ENCODE measurements at regions of chr2 and their contacts with region 1.

Region 1: DNA sequence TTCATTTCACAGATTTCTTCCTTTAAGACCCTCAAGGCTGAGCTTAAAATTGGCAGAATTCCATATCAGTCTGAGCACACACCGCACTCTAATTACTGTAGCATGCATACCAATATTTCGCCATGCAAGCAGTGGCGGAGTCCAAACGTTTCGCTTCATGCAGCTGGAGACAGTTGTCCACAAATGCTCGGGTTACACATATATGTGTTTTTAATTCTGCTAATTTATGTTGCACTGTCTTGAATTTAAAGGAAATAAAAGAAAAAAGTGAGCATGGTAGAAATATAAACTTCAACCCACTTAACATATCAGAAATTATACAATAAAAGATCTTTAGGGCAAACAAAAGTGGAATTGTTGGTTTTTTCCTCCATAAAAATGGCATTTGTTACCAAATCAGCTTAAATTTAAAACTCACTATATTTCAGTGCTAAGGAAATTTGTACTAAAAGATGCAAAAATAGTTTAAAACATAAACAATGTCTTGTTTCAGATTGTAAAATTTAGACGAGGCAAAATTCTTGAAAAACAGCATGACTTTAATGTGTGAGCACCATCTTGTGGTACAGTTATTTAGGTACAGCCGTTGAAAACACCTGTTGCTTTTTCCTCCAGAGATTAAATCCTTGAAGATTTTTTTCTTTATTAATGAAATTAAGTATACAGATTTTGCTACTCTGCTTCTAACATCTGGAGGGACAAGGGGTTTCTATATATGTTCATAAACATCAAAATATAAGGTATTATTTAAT is 24.1 kb upstream of the KANSL1L start:
- DNase-seq: peak; percentile 51
- ATAC-seq: peak; percentile 88
- H3K4me3 ChIP-seq: peak overlapping the region; percentile 5 to 44 (median 34); a peak in 4 of 6 replicates
- H3K27ac ChIP-seq: no peak overlapping the region
- H3K4me1 ChIP-seq: peaks cover 7% of the 10 kb centered on the region; the same call in 1 of the 2 replicates
- H3K27me3 ChIP-seq: no peaks in the 10 kb centered on the region
- CTCF ChIP-seq: peak; percentile 77
- EP300 ChIP-seq: no peak
- POLR2A ChIP-seq: no peak
- RAD21 ChIP-seq: peak; percentile 82

Region 2: GRCh38 chr2:209790066-209790728 is 405.1 kb before region 1 on chr2:
- CTCF ChIA-PET with region 1: no interaction called
- POLR2A ChIA-PET with region 1: no interaction called
- in situ Hi-C with region 1: no loop called
- intact Hi-C with region 1: loop called (anchors 5 kb)
- DNase-seq: no peak
- ATAC-seq: peak; percentile 37; the same call in 2 of the 3 replicates
- H3K4me3 ChIP-seq: peak overlapping the region in 2 of 3 experiments; percentile 8 to 14; a peak in 3 of 6 replicates
- H3K27ac ChIP-seq: no peak overlapping the region
- H3K4me1 ChIP-seq: no peaks in the 10 kb centered on the region
- H3K27me3 ChIP-seq: no peaks in the 10 kb centered on the region
- CTCF ChIP-seq: no peak
- EP300 ChIP-seq: no peak
- POLR2A ChIP-seq: no peak
- RAD21 ChIP-seq: no peak

Region 3: DNA sequence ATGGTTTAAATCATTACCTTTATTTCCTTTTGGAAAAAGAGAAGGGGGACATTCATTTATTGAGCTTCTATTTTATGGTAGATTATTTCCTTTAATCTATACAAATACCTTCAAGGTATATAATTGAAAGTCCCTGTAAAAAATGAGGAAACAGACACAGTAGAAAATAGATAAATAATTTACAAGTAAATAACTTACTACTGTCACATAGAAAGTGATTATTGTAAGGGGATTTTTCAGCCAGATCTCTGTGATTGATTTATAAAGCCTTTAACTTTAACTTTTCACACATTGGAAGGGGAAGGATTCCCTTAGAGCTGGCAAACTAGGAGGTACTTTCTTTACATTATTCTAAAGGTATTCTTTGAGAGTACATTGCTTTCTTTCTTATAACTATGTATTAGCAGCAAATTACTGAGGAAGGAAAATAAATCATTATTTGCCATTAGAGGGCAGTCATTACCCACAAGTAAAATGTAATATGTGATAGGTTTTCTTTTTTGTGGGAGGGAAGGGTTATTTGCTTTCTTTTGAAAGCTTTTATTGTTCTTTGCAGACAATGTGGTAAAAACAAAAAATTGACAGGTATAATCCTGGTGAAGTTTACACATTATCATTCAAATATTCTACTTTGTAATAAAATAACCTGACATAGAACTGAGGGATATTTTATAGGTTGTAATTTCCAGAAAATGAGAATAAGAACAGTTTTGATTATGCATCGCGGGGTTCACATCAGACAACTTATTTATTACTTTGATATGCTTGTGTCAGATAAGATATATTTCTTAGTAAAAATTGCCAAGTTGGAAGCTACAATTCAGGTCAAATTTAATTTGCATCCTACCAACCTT is 217.7 kb before region 1 on chr2:
- CTCF ChIA-PET with region 1: interaction called, 66 read pairs
- POLR2A ChIA-PET with region 1: no interaction called
- in situ Hi-C with region 1: loop called (anchors 5 kb)
- intact Hi-C with region 1: loop called (anchors 1 kb)
- DNase-seq: peak; percentile 39
- ATAC-seq: no peak; the same call in 2 of the 3 replicates
- H3K4me3 ChIP-seq: no peak overlapping the region
- H3K27ac ChIP-seq: no peak overlapping the region
- H3K4me1 ChIP-seq: no peaks in the 10 kb centered on the region
- H3K27me3 ChIP-seq: peaks cover 0 to 5% of the 10 kb centered on the region in 2 experiments; a peak in 1 of 5 replicates
- CTCF ChIP-seq: peak; percentile 68
- EP300 ChIP-seq: no peak
- POLR2A ChIP-seq: no peak
- RAD21 ChIP-seq: peak; percentile 61

Region 4: DNA sequence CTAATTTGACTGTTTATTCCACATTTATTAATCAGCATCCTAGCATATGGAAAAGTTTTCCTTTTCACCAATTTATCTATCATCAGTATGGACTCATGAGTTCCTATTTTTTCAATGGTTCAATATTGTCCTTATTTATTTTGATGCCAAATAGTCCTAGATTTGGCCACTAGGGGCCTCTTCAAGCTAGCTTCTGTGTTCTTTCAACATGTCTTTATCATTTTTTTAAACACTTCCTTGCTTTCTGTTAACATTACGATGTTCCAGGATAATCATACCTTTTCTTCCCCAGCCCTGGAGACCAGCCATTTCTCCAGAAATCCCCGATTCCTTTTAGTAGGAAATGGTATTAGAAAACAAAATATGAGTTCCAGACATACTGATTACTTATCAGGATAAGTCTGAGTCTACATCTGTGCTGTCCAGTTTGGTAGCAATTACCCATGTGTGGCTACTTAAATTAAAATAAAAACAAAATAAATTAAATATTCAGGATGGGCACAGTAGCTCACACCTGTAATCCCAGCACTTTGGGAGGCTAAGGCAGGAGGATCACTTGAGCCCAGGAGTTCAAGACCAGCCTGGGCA is 122.3 kb before region 1 on chr2:
- CTCF ChIA-PET with region 1: interaction called, 30 read pairs
- POLR2A ChIA-PET with region 1: no interaction called
- in situ Hi-C with region 1: loop called (anchors 5 kb)
- intact Hi-C with region 1: loop called (anchors 1 kb)
- DNase-seq: peak; percentile 46
- ATAC-seq: peak; percentile 88
- H3K4me3 ChIP-seq: no peak overlapping the region
- H3K27ac ChIP-seq: no peak overlapping the region
- H3K4me1 ChIP-seq: no peaks in the 10 kb centered on the region
- H3K27me3 ChIP-seq: no peaks in the 10 kb centered on the region
- CTCF ChIP-seq: peak; percentile 43
- EP300 ChIP-seq: no peak
- POLR2A ChIP-seq: no peak
- RAD21 ChIP-seq: 0 out of 2 replicates have a peak, but pooled peaks have one; percentile 28

Region 5: DNA sequence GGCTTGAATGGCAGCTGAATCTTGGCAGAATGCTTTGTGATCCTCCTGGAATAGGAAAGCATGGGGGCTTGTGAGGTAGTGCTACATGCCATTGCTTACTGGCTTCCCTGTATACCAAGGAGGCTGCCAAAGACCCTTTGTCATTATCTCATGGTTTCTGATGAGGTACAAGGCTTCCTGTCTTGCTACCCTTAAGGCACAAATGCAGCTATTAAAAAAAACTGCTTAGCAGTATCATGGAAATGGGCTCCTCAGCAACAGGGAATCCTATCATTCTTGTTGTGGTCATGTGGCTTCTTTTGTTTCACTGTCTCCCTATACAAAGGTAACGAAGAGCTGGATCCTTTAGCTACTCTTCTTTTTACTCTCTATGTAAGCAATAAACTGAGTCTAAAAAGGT is 17.5 kb before region 1 on chr2:
- CTCF ChIA-PET with region 1: no interaction called
- POLR2A ChIA-PET with region 1: interaction called, 3 read pairs
- in situ Hi-C with region 1: no loop called
- intact Hi-C with region 1: loop called (anchors 1 kb)
- DNase-seq: no peak
- ATAC-seq: no peak
- H3K4me3 ChIP-seq: no peak overlapping the region
- H3K27ac ChIP-seq: no peak overlapping the region
- H3K4me1 ChIP-seq: peaks cover 16% of the 10 kb centered on the region
- H3K27me3 ChIP-seq: no peaks in the 10 kb centered on the region; a peak in 1 of 5 replicates
- CTCF ChIP-seq: no peak
- EP300 ChIP-seq: no peak
- POLR2A ChIP-seq: no peak
- RAD21 ChIP-seq: no peak

Region 6: DNA sequence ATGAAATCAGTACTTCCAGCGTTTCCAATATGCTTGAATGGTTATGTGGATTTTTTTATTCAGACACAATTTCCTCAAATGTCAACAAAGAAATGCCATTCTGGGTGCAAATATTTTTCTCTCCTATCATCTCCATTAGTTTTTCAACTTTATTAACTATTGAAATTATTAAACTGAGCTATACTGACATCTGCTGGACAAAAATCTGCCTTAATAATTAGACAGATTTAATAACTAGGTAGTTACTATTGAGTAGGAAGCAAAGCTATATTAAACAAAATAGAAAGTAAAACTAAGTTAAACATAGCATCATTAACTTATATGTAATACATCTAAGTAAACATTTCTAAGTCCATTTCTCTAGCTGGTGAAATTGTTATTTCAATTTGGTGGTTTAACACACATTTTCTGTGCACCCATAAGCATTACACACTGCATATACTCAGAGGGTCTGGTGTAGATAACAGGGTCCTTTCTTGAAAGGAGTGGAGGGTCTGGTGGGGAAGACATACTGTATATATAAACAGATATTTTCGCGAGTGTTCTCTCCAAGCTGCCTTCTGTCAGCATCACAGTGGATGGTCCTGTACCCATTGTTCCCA is 204.3 kb after region 1 on chr2:
- CTCF ChIA-PET with region 1: interaction called, 3 read pairs
- POLR2A ChIA-PET with region 1: no interaction called
- in situ Hi-C with region 1: no loop called
- intact Hi-C with region 1: loop called (anchors 5 kb)
- DNase-seq: peak; percentile 19
- ATAC-seq: no peak
- H3K4me3 ChIP-seq: no peak overlapping the region
- H3K27ac ChIP-seq: no peak overlapping the region
- H3K4me1 ChIP-seq: no peaks in the 10 kb centered on the region
- H3K27me3 ChIP-seq: no peaks in the 10 kb centered on the region
- CTCF ChIP-seq: peak; percentile 25; the same call in 1 of the 2 replicates
- EP300 ChIP-seq: no peak
- POLR2A ChIP-seq: no peak
- RAD21 ChIP-seq: no peak

Measured in HepG2 (cell line).